ENCODE measurements at regions of chr20 and their contacts with region 1.

Region 1: GRCh38 chr20:4813863-4814695 is 92.4 kb downstream of the PRND start:
- DNase-seq: peak; percentile 76
- H3K4me3 Mint-ChIP-seq: peak overlapping the region; percentile 96
- H3K27ac Mint-ChIP-seq: peak overlapping the region; percentile 98
- H3K4me1 Mint-ChIP-seq: peaks cover 78% of the 10 kb centered on the region
- H3K27me3 Mint-ChIP-seq: no peaks in the 10 kb centered on the region

Region 2: DNA sequence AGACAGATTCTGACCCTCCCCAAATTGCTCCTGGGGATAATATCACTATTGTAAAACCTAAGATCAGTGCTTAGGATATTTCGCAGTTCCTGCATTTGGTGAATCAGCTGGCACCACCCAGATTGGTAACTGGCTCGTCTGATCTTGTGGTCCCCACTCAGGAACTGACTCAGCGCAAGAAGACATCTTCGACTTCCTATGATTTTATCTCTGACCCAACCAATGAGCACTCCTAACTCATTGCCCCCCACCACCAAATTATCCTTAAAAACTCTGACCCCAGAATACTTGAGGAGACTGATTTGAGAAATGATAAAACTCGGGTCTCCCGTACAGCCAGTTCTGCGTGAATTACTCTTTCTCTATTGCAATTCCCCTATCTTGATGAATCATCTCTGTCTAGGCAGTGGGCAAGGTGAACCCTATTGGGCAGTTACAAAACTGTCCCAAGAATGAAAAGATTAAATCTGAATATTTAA is 148.0 kb before region 1 on chr20:
- CTCF ChIA-PET with region 1: no interaction called
- POLR2A ChIA-PET with region 1: interaction called, 12 read pairs
- DNase-seq: peak; percentile 81
- H3K4me3 Mint-ChIP-seq: peak overlapping the region; percentile 57
- H3K27ac Mint-ChIP-seq: peak overlapping the region; percentile 95
- H3K4me1 Mint-ChIP-seq: peaks cover 69% of the 10 kb centered on the region
- H3K27me3 Mint-ChIP-seq: no peaks in the 10 kb centered on the region

Region 3: GRCh38 chr20:4677846-4678245 is 136.2 kb before region 1 on chr20:
- CTCF ChIA-PET with region 1: no interaction called
- POLR2A ChIA-PET with region 1: no interaction called
- DNase-seq: no peak
- H3K4me3 Mint-ChIP-seq: no peak overlapping the region
- H3K27ac Mint-ChIP-seq: no peak overlapping the region
- H3K4me1 Mint-ChIP-seq: peaks cover 19% of the 10 kb centered on the region
- H3K27me3 Mint-ChIP-seq: peaks cover 15% of the 10 kb centered on the region

Region 4: GRCh38 chr20:4795394-4795793 is 18.7 kb before region 1 on chr20:
- CTCF ChIA-PET with region 1: interaction called, 11 read pairs
- POLR2A ChIA-PET with region 1: interaction called, 102 read pairs
- DNase-seq: peak; percentile 62
- H3K4me3 Mint-ChIP-seq: no peak overlapping the region
- H3K27ac Mint-ChIP-seq: peak overlapping the region; percentile 86
- H3K4me1 Mint-ChIP-seq: peaks cover 40% of the 10 kb centered on the region
- H3K27me3 Mint-ChIP-seq: no peaks in the 10 kb centered on the region

Region 5: GRCh38 chr20:4956200-4956810 is 142.2 kb after region 1 on chr20:
- CTCF ChIA-PET with region 1: interaction called, 16 read pairs
- POLR2A ChIA-PET with region 1: no interaction called
- DNase-seq: no peak
- H3K4me3 Mint-ChIP-seq: no peak overlapping the region
- H3K27ac Mint-ChIP-seq: no peak overlapping the region
- H3K4me1 Mint-ChIP-seq: peaks cover 9% of the 10 kb centered on the region
- H3K27me3 Mint-ChIP-seq: no peaks in the 10 kb centered on the region

Region 6: DNA sequence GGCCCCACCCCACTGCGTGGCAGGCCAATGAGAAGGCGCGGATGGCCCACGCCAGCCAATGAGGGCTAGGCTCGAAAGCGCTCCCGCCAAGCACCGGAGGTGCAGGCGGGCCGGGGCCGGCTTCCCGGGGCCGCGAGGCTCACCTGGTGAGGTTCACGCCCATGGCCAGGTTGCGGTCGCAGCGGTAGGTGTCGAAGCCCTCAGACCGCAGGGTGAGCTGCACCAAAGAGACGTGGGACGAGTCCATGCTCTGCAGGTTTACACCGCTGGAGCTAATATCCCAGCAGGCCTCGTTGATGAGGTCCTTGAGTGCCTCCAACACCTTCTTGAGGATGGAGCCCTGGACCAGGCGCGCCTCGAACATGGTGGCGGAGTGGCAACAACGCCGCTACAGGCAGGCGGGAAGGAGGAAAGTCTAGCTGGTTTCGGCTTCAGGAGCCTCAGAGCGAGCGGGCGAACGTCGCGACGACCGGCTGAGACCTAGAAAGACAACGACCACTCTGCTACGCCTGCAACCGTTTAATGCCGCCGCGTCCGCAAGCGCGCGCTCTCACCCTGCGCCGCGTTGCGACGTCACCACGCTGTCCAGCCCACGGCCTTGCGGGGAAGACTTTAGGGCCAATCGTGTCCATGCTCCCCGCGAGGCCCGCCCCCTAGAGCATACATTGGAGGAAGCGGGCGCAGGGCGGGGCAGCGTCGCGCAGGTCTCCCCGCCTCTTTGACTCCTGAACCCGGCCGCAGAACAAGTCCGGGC is 305.5 kb after region 1 on chr20 and contains the start of gene PCNA:
- CTCF ChIA-PET with region 1: interaction called, 3 read pairs
- POLR2A ChIA-PET with region 1: interaction called, 36 read pairs
- DNase-seq: peak; percentile 98
- H3K4me3 Mint-ChIP-seq: peak within 1 kb of the TSS; percentile 86
- H3K27ac Mint-ChIP-seq: peak within 1 kb of the TSS; percentile 90
- H3K4me1 Mint-ChIP-seq: peaks cover 69% of the 10 kb centered on the region
- H3K27me3 Mint-ChIP-seq: no peaks in the 10 kb centered on the region
- total RNA-seq, gene PCNA: 413 to 415 TPM

Measured in activated CD4-positive, alpha-beta memory T cell treated with anti-CD3 and anti-CD28 coated beads, Interleukin-2, amount 10 ng/mL, durations not matched to agents 7 days and 5 days (primary cell).